ENCODE measurements at regions of chr3 and their contacts with region 1.

Region 1: DNA sequence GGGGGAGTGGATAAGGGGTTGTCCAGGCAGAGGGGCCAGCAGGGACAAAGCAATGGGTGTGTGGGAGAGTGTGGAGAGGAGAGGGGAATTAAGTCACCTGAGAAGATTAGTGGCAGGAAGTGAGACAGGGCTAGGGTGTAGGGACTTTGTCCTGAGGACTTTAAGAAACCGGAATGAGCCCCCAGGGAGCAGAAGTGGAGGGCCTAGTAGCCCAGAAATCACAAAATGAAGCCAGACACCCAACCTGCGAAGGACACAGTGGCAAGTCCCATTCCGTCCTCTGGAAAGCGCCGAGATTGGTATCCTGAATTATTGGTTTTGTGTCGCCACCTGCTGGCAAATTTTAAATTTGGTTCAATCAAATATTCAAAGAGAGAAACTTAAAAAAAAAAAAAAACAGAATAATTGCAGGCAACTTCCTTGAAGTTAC is 78.0 kb upstream of the SLC25A36 start:
- DNase-seq: peak; percentile 67
- ATAC-seq: no peak
- H3K4me3 ChIP-seq: no peak overlapping the region
- H3K4me3 Mint-ChIP-seq: no peak overlapping the region
- H3K27ac ChIP-seq: no peak overlapping the region
- H3K27ac Mint-ChIP-seq: no peak overlapping the region
- H3K4me1 ChIP-seq: peaks cover 0 to 5% of the 10 kb centered on the region in 2 donors
- H3K4me1 Mint-ChIP-seq: peaks cover 3% of the 10 kb centered on the region
- H3K27me3 ChIP-seq: peaks cover 0 to 5% (median 0%) of the 10 kb centered on the region in 4 experiments
- H3K27me3 Mint-ChIP-seq: peaks cover 12% of the 10 kb centered on the region
- CTCF ChIP-seq: peak; percentile 74

Region 2: GRCh38 chr3:139427283-139427993 is 1436.2 kb before region 1 on chr3:
- CTCF ChIA-PET with region 1: interaction called, 34 read pairs
- POLR2A ChIA-PET with region 1: no interaction called
- intact Hi-C with region 1: no loop called
- DNase-seq: peak; percentile 53
- ATAC-seq: no peak
- H3K4me3 ChIP-seq: no peak overlapping the region
- H3K4me3 Mint-ChIP-seq: no peak overlapping the region
- H3K27ac ChIP-seq: no peak overlapping the region
- H3K27ac Mint-ChIP-seq: no peak overlapping the region
- H3K4me1 ChIP-seq: no peaks in the 10 kb centered on the region
- H3K4me1 Mint-ChIP-seq: no peaks in the 10 kb centered on the region
- H3K27me3 ChIP-seq: no peaks in the 10 kb centered on the region
- H3K27me3 Mint-ChIP-seq: no peaks in the 10 kb centered on the region
- CTCF ChIP-seq: peak; percentile 76

Region 3: GRCh38 chr3:139935016-139935865 is 928.4 kb before region 1 on chr3 and contains the start of gene CLSTN2:
- CTCF ChIA-PET with region 1: interaction called, 20 read pairs
- POLR2A ChIA-PET with region 1: no interaction called
- intact Hi-C with region 1: no loop called
- DNase-seq: peak; percentile 8
- ATAC-seq: no peak
- H3K4me3 ChIP-seq: no peak within 1 kb of the TSS
- H3K4me3 Mint-ChIP-seq: peak within 1 kb of the TSS; percentile 48
- H3K27ac ChIP-seq: no peak within 1 kb of the TSS
- H3K27ac Mint-ChIP-seq: no peak within 1 kb of the TSS
- H3K4me1 ChIP-seq: peaks cover 9 to 11% of the 10 kb centered on the region in 2 donors
- H3K4me1 Mint-ChIP-seq: peaks cover 9% of the 10 kb centered on the region
- H3K27me3 ChIP-seq: peaks cover 0 to 43% (median 23%) of the 10 kb centered on the region in 4 experiments
- H3K27me3 Mint-ChIP-seq: peaks cover 50% of the 10 kb centered on the region
- CTCF ChIP-seq: no peak
- total RNA-seq, gene CLSTN2: not detected in 2 replicates

Region 4: GRCh38 chr3:140128631-140129030 is 735.0 kb before region 1 on chr3:
- CTCF ChIA-PET with region 1: interaction called, 17 read pairs
- POLR2A ChIA-PET with region 1: no interaction called
- intact Hi-C with region 1: no loop called
- DNase-seq: peak; percentile 7
- ATAC-seq: no peak
- H3K4me3 ChIP-seq: no peak overlapping the region
- H3K4me3 Mint-ChIP-seq: no peak overlapping the region
- H3K27ac ChIP-seq: no peak overlapping the region
- H3K27ac Mint-ChIP-seq: no peak overlapping the region
- H3K4me1 ChIP-seq: no peaks in the 10 kb centered on the region
- H3K4me1 Mint-ChIP-seq: no peaks in the 10 kb centered on the region
- H3K27me3 ChIP-seq: no peaks in the 10 kb centered on the region
- H3K27me3 Mint-ChIP-seq: peaks cover 4% of the 10 kb centered on the region
- CTCF ChIP-seq: peak; percentile 22